ENCODE measurements at regions of chr2 and their contacts with region 1.

Region 1: DNA sequence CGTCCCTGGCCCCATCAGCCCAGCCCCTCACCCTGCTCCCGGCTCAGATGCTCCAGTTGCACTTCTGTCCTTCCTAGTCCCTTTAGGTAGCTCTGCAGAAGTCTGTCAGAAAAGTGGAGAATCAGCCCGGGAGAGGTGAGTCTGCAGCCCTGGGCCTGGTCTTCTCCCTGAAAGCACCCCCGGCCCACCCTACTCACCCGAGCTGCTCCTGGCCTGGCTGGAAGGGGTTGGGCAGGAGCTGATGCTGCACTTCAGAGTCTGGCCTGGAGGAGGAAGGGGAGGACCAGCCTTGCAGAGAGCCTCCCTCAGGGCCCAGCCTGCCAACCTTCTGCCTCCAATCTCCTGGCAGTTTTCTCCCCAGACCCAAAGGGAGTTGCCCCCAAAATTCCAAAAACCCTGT is 15.8 kb downstream of the KHK start:
- DNase-seq: no peak
- H3K4me3 Mint-ChIP-seq: no peak overlapping the region
- H3K27ac Mint-ChIP-seq: no peak overlapping the region
- H3K4me1 Mint-ChIP-seq: no peaks in the 10 kb centered on the region
- H3K27me3 Mint-ChIP-seq: peaks cover 10% of the 10 kb centered on the region

Region 2: DNA sequence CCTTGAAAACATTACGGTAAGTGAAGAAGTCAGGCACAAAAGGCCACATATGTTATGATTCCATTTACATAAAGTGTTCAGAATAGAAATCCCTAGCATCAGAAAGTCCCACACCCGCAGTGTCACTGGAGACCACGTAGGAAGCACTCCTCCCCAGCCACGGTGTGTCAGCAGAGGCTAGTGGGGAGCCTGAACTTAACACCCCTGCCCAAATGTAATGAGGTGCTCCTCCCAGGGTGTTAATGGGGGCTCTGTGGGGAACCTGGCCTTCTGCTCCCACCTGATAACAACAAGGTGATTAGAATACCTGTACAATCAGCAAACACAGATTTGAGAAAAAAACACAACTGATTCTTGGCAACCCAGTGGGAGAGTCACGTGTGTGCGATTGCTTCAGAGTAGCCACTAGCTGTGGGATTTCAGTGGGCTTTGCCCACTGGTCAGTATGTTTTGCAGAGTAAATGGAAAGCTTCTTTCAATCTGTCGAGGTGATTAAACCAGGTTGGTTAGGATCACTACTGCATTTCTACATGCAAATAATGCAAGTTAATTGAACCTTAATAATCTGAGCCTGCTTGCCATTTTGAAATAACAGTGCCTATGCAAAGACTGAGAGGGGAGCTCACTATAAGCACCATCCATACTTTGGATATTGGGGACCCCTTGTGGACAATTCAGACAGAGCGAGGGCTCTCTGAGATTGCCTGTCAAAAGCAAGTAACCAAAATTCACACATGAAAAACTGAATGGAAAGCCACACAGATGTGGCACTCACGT is 88.9 kb after region 1 on chr2:
- CTCF ChIA-PET with region 1: interaction called, 11 read pairs
- DNase-seq: peak; percentile 71
- H3K4me3 Mint-ChIP-seq: no peak overlapping the region
- H3K27ac Mint-ChIP-seq: no peak overlapping the region
- H3K4me1 Mint-ChIP-seq: no peaks in the 10 kb centered on the region
- H3K27me3 Mint-ChIP-seq: peaks cover 17% of the 10 kb centered on the region

Measured in activated naive CD4-positive, alpha-beta T cell treated with anti-CD3 and anti-CD28 coated beads, Interleukin-2, amount 10 ng/mL, durations not matched to agents 7 days and 5 days (primary cell).